K562 (cell line): ENCODE measurements at regions of chr13 and their contacts with region 1.

Region 1: GRCh38 chr13:111474136-111475002 is 153.9 kb downstream of the TEX29 start:
- DNase-seq: peak; percentile 17 to 57 (median 24)
- ATAC-seq: peak; percentile 77
- H3K4me3 ChIP-seq: no peak overlapping the region
- H3K27ac ChIP-seq: no peak overlapping the region
- H3K4me1 ChIP-seq: no peaks in the 10 kb centered on the region
- H3K27me3 ChIP-seq: peaks cover 0 to 25% of the 10 kb centered on the region in 2 experiments; a peak in 3 of 5 replicates
- CTCF ChIP-seq: peak; percentile 42 to 59 (median 56); a peak in 5 of 6 replicates
- EP300 ChIP-seq: no peak
- POLR2A ChIP-seq: no peak
- RAD21 ChIP-seq: peak; percentile 49 to 54

Region 2: GRCh38 chr13:110772091-110772984 is 702.0 kb before region 1 on chr13:
- CTCF ChIA-PET with region 1: no interaction called
- POLR2A ChIA-PET with region 1: no interaction called
- in situ Hi-C with region 1: no loop called
- intact Hi-C with region 1: no loop called
- DNase-seq: no peak
- ATAC-seq: no peak
- H3K4me3 ChIP-seq: no peak overlapping the region
- H3K27ac ChIP-seq: no peak overlapping the region
- H3K4me1 ChIP-seq: no peaks in the 10 kb centered on the region; a peak in 1 of 5 replicates
- H3K27me3 ChIP-seq: peaks cover 14 to 33% of the 10 kb centered on the region in 2 experiments
- CTCF ChIP-seq: no peak
- EP300 ChIP-seq: no peak
- POLR2A ChIP-seq: no peak
- RAD21 ChIP-seq: no peak

Region 3: DNA sequence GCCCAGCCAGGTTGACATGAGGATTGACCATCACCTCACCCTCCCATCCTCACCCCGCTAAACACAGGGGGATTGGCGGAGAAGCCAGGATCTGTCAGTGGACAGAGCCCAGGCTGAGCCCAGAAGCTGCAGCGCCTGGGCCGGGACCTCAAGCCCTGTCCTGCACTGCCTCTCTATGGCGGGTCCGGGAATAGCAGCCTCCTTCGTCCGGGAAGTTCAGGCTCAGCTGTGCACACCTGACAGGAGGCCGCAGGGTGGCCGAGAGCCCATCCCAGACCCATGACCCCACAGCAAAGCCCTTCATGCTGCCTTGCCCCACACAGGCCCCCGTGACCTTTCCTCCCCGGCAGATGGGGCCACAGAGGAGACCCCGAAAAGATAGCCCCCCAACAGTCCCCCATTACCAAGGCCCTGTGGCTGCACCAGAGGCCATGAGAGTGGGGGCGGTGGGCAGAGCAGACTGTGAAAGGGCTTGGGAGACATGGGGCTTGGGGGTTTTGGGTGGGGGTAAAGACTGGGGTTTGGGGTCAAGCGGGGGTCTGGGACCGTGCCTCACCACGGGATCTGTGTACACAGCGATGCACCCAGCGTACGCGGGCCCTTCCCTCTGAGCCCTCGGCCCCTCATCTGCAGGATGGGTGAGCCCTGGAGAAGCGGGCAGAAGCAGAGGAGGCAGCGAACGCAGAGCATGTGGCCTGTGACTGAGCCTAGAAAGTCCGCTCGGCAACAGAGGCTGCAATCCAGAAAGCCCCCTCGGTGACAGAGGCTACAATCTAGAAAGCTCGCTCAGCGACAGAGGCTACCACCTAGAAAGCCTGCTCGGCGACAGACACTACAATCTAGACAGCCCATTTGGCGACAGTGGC is 969.9 kb after region 1 on chr13:
- CTCF ChIA-PET with region 1: interaction called, 6 read pairs
- POLR2A ChIA-PET with region 1: interaction called, 3 read pairs
- in situ Hi-C with region 1: loop called (anchors 10 kb)
- intact Hi-C with region 1: no loop called
- DNase-seq: peak; percentile 65 to 70 (median 70)
- ATAC-seq: peak; percentile 95
- H3K4me3 ChIP-seq: no peak overlapping the region
- H3K27ac ChIP-seq: no peak overlapping the region
- H3K4me1 ChIP-seq: peaks cover 0 to 7% of the 10 kb centered on the region in 2 experiments; a peak in 1 of 5 replicates
- H3K27me3 ChIP-seq: peaks cover 17 to 49% of the 10 kb centered on the region in 2 experiments; a peak in 4 of 5 replicates
- CTCF ChIP-seq: peak; percentile 84 to 87 (median 85)
- EP300 ChIP-seq: no peak
- POLR2A ChIP-seq: no peak
- RAD21 ChIP-seq: peak; percentile 66 to 84

Region 4: GRCh38 chr13:112606109-112607001 is 1132.0 kb after region 1 on chr13:
- CTCF ChIA-PET with region 1: no interaction called
- POLR2A ChIA-PET with region 1: no interaction called
- in situ Hi-C with region 1: loop called (anchors 25 kb)
- intact Hi-C with region 1: loop called (anchors 10 kb)
- DNase-seq: peak; percentile 88 to 93 (median 91)
- ATAC-seq: peak; percentile 100
- H3K4me3 ChIP-seq: peak overlapping the region; percentile 34
- H3K27ac ChIP-seq: no peak overlapping the region
- H3K4me1 ChIP-seq: peaks cover 0 to 5% of the 10 kb centered on the region in 2 experiments; a peak in 1 of 5 replicates
- H3K27me3 ChIP-seq: peaks cover 6 to 7% of the 10 kb centered on the region in 2 experiments; a peak in 4 of 5 replicates
- CTCF ChIP-seq: peak; percentile 85 to 88 (median 86)
- EP300 ChIP-seq: no peak
- POLR2A ChIP-seq: no peak
- RAD21 ChIP-seq: peak; percentile 89